Mammary epithelial cell (primary cell): ENCODE measurements at regions of chr3 and their contacts with region 1.

Region 1: GRCh38 chr3:10945683-10946287 is 46.8 kb upstream of the SLC6A1 start:
- DNase-seq: peak; percentile 33
- H3K4me3 ChIP-seq: no peak overlapping the region
- H3K27ac ChIP-seq: no peak overlapping the region
- H3K4me1 ChIP-seq: peaks cover 16% of the 10 kb centered on the region
- H3K27me3 ChIP-seq: no peaks in the 10 kb centered on the region
- CTCF ChIP-seq: peak; percentile 66 to 85

Region 2: GRCh38 chr3:10772271-10773161 is 173.3 kb before region 1 on chr3:
- CTCF ChIA-PET with region 1: interaction called, 3 read pairs
- dilution Hi-C with region 1: no loop called
- in situ Hi-C with region 1: no loop called
- intact Hi-C with region 1: loop called (anchors 5 kb)
- DNase-seq: peak; percentile 81
- H3K4me3 ChIP-seq: no peak overlapping the region
- H3K27ac ChIP-seq: peak overlapping the region; percentile 86
- H3K4me1 ChIP-seq: peaks cover 26% of the 10 kb centered on the region
- H3K27me3 ChIP-seq: no peaks in the 10 kb centered on the region
- CTCF ChIP-seq: peak; percentile 53 to 75

Region 3: DNA sequence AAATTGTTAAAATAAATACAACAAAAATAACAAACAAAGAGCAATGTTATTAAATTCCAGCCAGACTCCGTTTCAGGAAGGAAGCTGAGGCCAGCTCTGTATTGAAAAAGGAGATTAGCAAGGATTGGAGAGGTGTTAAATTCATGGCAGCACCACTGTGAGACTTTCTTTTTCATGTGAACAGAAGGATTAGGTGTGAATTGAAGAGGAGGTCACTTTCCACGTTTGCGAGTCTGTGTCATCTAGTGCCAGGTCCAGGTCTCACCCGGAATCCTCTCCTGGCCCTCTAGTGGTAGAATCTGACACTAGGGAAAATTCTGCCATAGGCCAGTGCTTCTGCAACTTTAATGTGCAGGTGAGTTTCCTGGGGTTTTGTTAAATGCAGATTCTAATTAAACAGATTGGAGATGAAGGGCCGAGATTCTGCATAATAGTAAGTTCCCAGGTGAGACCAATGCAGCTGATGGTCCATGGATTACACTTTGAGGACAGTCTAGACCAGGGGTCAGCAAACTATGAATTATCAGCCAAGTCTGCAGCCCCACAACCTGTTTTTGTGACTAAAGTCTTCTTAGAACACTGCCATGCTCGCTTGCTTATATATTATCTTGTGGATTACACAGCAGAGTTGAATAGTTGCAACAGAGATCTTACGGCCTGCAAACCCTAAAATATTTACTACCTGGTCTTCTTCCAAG is 37.6 kb after region 1 on chr3:
- CTCF ChIA-PET with region 1: no interaction called
- dilution Hi-C with region 1: no loop called
- in situ Hi-C with region 1: no loop called
- intact Hi-C with region 1: loop called (anchors 1 kb)
- DNase-seq: peak; percentile 51
- H3K4me3 ChIP-seq: no peak overlapping the region
- H3K27ac ChIP-seq: no peak overlapping the region
- H3K4me1 ChIP-seq: peaks cover 8% of the 10 kb centered on the region
- H3K27me3 ChIP-seq: peaks cover 24% of the 10 kb centered on the region
- CTCF ChIP-seq: peak; percentile 78 to 91

Region 4: DNA sequence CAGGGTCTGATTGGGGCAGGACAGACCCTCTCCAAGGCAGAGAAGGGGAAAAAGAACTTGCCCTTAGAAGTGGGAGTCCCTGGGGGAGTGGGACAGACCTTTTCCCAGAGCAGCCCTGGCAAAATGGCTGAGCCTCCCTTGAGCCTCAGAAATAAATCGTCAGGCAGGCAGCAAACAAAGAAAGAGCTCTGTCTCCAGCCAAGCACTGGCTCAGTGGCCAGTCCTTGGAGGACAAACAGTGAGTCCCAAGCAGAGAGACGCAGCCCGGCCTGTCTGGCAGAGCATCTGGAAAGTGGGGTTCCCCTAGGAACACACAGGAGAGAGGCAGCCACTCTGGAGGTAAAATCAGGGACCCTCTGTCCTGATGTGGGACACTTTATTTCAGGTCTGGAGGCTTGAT is 48.5 kb after region 1 on chr3:
- CTCF ChIA-PET with region 1: no interaction called
- dilution Hi-C with region 1: no loop called
- in situ Hi-C with region 1: no loop called
- intact Hi-C with region 1: no loop called
- DNase-seq: no peak
- H3K4me3 ChIP-seq: no peak overlapping the region
- H3K27ac ChIP-seq: no peak overlapping the region
- H3K4me1 ChIP-seq: no peaks in the 10 kb centered on the region
- H3K27me3 ChIP-seq: peaks cover 51% of the 10 kb centered on the region
- CTCF ChIP-seq: no peak

Region 5: DNA sequence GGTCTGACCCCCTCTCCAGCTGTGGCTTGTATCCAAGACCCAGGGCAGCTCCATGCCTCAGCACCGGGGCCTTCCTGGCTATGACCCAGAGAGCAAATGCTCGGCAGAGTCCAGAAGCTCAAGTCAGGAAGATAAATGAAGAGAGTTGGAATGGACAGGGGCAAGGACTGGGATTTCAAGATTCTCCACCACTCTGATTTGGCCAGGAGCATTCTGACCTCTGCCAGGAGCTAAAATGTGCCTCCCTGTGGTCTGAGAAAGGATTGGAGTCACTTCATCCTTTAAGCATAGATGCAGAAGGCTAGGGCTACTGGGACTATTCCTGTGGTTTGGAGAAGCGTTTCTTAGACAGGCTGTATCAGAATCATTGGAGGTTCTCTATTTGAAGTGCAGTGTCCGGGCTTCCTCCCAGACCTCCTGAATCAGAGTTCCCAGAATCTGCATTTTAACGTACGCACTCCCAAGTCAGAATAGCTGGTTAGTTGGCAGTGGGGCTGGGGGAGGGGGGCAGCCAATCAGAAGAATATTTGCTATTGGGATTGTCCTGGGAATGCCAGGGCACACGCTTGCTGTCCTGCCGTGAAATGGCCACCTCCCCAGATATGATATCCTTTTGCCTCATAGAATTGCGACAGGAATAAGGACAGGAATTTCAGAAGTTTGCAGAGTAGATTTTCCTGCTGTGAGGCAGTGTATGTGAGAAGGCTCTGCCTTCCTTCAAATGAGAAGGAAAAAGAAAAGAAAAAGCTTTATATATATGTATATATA is 265.9 kb after region 1 on chr3:
- CTCF ChIA-PET with region 1: no interaction called
- dilution Hi-C with region 1: no loop called
- in situ Hi-C with region 1: no loop called
- intact Hi-C with region 1: loop called (anchors 10 kb)
- DNase-seq: no peak
- H3K4me3 ChIP-seq: no peak overlapping the region
- H3K27ac ChIP-seq: no peak overlapping the region
- H3K4me1 ChIP-seq: peaks cover 19% of the 10 kb centered on the region
- H3K27me3 ChIP-seq: no peaks in the 10 kb centered on the region
- CTCF ChIP-seq: peak in 1 of 2 donors; percentile 32

Region 6: DNA sequence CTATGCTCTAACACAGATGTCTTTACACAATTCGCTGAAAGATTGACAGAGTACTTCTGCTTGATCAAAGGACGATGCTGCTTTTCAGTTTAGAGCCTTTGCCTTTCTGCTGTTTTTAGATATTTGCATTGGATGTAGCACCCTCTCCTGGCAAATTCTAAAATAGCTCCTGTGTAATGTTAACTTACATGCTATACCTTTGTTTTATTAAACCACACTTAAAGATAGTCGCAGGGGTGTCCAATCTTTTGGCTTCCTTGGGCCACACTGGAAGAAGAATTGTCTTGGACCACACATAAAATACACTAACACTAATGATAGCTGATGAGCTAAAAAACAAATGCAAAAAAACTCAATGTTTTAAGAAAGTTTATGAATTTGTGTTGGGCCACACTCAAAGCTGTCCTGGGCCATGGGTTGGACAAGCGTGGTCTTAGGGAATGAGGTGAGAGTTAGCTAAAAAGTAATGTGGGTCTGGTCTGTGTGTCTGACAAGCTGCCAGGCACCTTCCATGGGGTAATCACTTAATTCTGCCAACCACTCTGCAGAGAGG is 389.3 kb after region 1 on chr3:
- CTCF ChIA-PET with region 1: interaction called, 10 read pairs
- dilution Hi-C with region 1: no loop called
- in situ Hi-C with region 1: loop called in 1 of 2 experiments (anchors 25 kb)
- intact Hi-C with region 1: no loop called
- DNase-seq: peak; percentile 62
- H3K4me3 ChIP-seq: no peak overlapping the region
- H3K27ac ChIP-seq: no peak overlapping the region
- H3K4me1 ChIP-seq: peaks cover 3% of the 10 kb centered on the region
- H3K27me3 ChIP-seq: no peaks in the 10 kb centered on the region
- CTCF ChIP-seq: peak; percentile 63 to 70